OCI-LY7 (cell line): ENCODE measurements at regions of chr4 and their contacts with region 1.

Region 1: DNA sequence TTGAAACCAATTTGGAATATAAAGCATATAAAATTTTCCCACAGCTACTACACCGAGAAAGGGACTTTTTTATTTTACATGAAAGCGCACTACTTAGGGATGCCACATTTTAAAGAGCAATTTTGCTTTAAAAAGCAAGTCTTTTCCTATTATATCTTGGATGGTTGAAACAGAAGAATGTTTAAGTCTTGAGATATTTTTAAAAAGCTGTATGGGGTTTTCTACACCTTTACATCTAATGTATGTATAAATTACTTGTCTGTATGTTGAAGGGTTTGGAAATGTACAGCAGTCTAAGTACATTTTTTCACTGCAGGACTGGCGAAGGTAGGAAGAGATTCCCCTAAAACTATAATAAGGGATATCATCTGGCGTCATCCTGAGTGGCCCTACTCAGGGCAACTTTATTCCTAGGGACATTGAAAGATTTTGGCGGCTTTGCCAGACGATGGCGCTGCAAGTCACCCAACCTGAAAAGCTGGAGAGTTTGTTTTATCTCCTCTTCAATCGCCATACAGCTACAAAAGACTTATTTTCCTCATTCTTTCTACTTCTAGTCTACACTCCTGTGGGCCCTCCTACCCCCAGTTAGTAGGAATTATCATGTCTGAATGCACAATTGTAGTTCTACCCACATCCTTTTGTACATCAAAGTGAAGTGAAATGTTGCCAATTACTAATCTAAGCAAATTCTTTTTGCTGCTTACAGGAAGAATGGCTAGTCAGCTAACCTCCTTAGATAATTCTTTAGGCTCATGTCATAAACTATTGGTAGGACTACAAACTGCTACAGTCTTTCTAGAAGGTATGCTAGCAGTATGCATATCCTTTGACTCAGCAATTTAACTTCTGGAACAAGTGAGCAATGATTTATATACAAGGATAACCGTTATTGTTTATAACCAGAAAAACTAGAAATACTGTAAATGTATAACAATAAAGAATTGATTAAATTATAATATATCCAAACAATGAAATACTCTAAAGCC is 782 bp upstream of the NEK1 start:
- DNase-seq: peak; percentile 82
- H3K4me3 ChIP-seq: peak overlapping the region; percentile 87
- H3K27ac ChIP-seq: peak overlapping the region; percentile 84
- H3K4me1 ChIP-seq: peaks cover 37% of the 10 kb centered on the region
- CTCF ChIP-seq: peak; percentile 94

Region 2: GRCh38 chr4:169757575-169758184 is 144.5 kb after region 1 on chr4 and contains the start of gene HPF1:
- CTCF ChIA-PET with region 1: no interaction called
- POLR2A ChIA-PET with region 1: interaction called, 5 read pairs
- intact Hi-C with region 1: loop called (anchors 2 kb)
- DNase-seq: peak; percentile 94
- H3K4me3 ChIP-seq: peak within 1 kb of the TSS; percentile 91
- H3K27ac ChIP-seq: peak within 1 kb of the TSS; percentile 21
- H3K4me1 ChIP-seq: peaks cover 19% of the 10 kb centered on the region
- CTCF ChIP-seq: 0 out of 2 replicates have a peak, but pooled peaks have one; percentile 12
- total RNA-seq, gene HPF1: 11.8 and 14.6 TPM in 2 replicates

Region 3: DNA sequence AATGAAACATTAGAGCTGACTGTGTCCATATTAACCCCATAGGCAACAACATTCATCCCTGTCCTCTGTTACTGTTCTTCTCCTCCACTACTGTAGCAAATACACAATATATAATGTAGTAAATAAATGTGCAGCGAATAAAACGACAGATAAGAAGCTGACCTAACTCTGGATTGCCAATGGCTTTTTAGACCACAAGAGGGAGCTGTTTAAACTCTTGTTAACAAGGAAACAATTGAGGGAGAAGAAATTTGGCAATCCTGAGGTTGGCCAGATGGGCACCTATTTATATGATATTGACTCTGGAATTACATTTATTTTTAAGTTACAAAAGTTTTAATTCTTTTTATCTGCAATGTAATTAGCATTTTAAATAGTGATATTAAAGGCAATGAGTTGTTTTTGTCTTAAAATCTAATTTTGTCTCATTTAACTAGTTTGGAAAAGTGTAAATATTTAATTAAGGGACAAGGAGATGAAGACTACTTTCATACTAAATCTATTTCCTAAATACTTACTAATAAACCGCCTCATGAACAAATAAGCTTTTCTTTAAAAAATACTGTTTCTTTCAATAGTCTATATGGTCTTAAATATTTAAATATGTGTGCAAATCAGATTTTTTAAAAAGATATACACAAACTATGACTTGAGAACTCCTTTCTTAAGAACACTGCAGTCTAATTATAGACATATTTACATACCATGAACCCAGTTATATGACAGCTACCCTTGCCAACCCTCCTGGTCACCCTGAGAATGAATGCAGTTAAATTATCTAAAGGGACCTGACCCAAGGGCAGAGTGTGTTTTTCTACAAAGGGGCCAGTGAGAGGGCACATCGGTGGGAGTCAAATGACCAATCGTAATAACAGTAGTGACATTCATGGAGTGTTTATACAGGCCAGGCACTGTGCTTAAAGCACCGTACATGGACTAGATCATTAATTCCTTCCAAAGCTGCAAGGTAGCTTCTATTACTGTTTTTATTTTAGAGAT is 197.5 kb after region 1 on chr4:
- CTCF ChIA-PET with region 1: no interaction called
- POLR2A ChIA-PET with region 1: no interaction called
- intact Hi-C with region 1: loop called (anchors 1 kb)
- DNase-seq: peak; percentile 71
- H3K4me3 ChIP-seq: no peak overlapping the region
- H3K27ac ChIP-seq: no peak overlapping the region
- H3K4me1 ChIP-seq: no peaks in the 10 kb centered on the region
- CTCF ChIP-seq: peak; percentile 97

Region 4: GRCh38 chr4:170047771-170048354 is 434.7 kb after region 1 on chr4:
- CTCF ChIA-PET with region 1: no interaction called
- POLR2A ChIA-PET with region 1: no interaction called
- intact Hi-C with region 1: loop called (anchors 5 kb)
- DNase-seq: peak; percentile 62
- H3K4me3 ChIP-seq: no peak overlapping the region
- H3K27ac ChIP-seq: no peak overlapping the region
- H3K4me1 ChIP-seq: no peaks in the 10 kb centered on the region
- CTCF ChIP-seq: peak; percentile 92

Region 5: GRCh38 chr4:170374770-170375169 is 761.6 kb after region 1 on chr4:
- CTCF ChIA-PET with region 1: no interaction called
- POLR2A ChIA-PET with region 1: no interaction called
- intact Hi-C with region 1: no loop called
- DNase-seq: peak; percentile 32
- H3K4me3 ChIP-seq: no peak overlapping the region
- H3K27ac ChIP-seq: no peak overlapping the region
- H3K4me1 ChIP-seq: no peaks in the 10 kb centered on the region
- CTCF ChIP-seq: peak; percentile 75